Kidney (tissue), 22 donors: ENCODE measurements at regions of chr1 and their contacts with region 1.

Region 1: DNA sequence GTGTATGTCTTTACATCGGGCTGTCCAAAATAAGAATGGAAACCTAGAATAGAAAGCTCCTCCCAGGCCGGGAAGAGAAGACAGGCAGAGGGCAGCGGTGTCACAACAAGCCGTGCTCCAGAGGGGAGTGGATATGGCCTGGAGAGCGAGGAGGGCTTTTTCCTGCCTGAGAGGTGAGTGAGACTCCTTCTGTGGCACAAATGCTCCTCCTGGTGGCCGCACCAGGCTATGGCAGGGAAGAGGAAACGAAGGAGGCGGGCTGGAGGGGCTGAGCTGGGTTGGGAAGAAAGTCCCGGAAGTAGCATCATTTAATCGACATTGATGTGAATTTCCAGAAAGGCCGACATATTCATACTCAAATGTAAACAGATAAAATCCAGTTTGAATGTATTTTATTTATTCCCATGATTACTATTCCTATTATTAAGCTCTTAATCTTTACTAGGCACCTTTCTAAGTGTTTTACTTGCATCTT is 54.7 kb downstream of the MEF2D start:
- DNase-seq: peak; percentile 86 to 90 (median 88)
- H3K4me3 ChIP-seq: no peak overlapping the region
- H3K27ac ChIP-seq: no peak overlapping the region
- H3K4me1 ChIP-seq: no peaks in the 10 kb centered on the region
- H3K27me3 ChIP-seq: peaks cover 31% of the 10 kb centered on the region
- CTCF ChIP-seq: peak; percentile 97

Region 2: DNA sequence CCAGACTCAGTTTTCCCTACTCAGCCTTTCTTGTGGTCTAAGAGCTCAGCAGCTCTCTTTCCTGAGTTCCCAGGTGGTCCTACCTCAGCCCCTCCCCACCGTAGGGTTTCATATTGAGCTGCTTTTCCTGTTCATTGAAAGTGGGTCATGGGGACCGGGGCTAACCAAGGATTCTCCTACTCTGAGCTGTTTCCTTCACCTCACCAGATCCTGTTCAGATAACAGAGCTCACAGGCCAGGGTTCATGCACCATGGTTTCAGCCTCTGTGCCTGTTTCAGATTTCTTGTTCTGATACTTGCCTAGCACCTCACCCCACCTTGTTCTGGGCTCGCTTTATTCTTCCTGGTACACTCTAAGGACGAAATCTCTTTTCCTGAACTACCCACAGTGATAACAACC is 400.8 kb before region 1 on chr1:
- intact Hi-C with region 1: no loop called
- DNase-seq: no peak
- H3K4me3 ChIP-seq: no peak overlapping the region
- H3K27ac ChIP-seq: no peak overlapping the region
- H3K4me1 ChIP-seq: peaks cover 0 to 6% (median 0%) of the 10 kb centered on the region in 3 donors
- H3K27me3 ChIP-seq: no peaks in the 10 kb centered on the region
- CTCF ChIP-seq: no peak

Region 3: GRCh38 chr1:156383023-156383422 is 62.8 kb before region 1 on chr1:
- intact Hi-C with region 1: loop called (anchors 5 kb)
- DNase-seq: peak in 4 of 5 donors; percentile 53 to 77 (median 66)
- H3K4me3 ChIP-seq: no peak overlapping the region
- H3K27ac ChIP-seq: no peak overlapping the region
- H3K4me1 ChIP-seq: peaks cover 0 to 4% (median 0%) of the 10 kb centered on the region in 3 donors
- H3K27me3 ChIP-seq: peaks cover 10% of the 10 kb centered on the region
- CTCF ChIP-seq: peak; percentile 72

Region 4: GRCh38 chr1:156394835-156395461 is 50.9 kb before region 1 on chr1:
- intact Hi-C with region 1: loop called (anchors 5 kb)
- DNase-seq: no peak
- H3K4me3 ChIP-seq: no peak overlapping the region
- H3K27ac ChIP-seq: no peak overlapping the region
- H3K4me1 ChIP-seq: no peaks in the 10 kb centered on the region
- H3K27me3 ChIP-seq: peaks cover 4% of the 10 kb centered on the region
- CTCF ChIP-seq: no peak

Region 5: GRCh38 chr1:156500797-156501499 is 55.1 kb after region 1 on chr1:
- intact Hi-C with region 1: no loop called
- DNase-seq: peak; percentile 96 to 99 (median 98)
- H3K4me3 ChIP-seq: peak overlapping the region; percentile 79 to 82 (median 80)
- H3K27ac ChIP-seq: peak overlapping the region; percentile 100
- H3K4me1 ChIP-seq: peaks cover 8 to 53% (median 49%) of the 10 kb centered on the region in 3 donors
- H3K27me3 ChIP-seq: no peaks in the 10 kb centered on the region
- CTCF ChIP-seq: peak; percentile 39